Dendritic cell treated with granulocyte-macrophage colony-stimulating factor and Interleukin-4, amounts not matched to agents 40 ng/mL and 50 ng/mL, for 4 days (primary cell): ENCODE measurements at regions of chr4 and their contacts with region 1.

Region 1: DNA sequence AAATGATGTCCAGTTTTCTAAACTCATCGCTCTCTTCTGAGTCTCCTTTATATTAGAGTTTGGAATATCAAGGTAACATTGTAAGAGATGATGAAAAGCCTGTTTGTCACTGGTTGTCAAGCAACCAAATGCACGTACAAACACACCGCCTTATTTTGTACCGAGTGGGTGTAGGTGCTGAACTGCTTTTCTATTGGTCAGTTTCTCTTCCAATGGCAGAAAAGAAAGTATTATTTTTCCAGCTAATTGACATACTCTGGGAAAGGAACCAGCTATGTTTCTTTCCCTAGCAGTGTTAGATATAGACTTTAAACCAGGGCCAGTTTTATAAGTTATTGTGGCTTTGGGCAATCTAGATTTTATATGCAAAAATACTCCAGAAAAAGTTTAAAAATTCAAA is 6.6 kb upstream of the PPM1K start:
- H3K4me3 Mint-ChIP-seq: no peak overlapping the region
- H3K27ac Mint-ChIP-seq: no peak overlapping the region
- H3K4me1 Mint-ChIP-seq: no peaks in the 10 kb centered on the region
- H3K27me3 Mint-ChIP-seq: no peaks in the 10 kb centered on the region

Region 2: GRCh38 chr4:88276952-88277710 is 13.9 kb before region 1 on chr4:
- intact Hi-C with region 1: loop called (anchors 2 kb)
- H3K4me3 Mint-ChIP-seq: no peak overlapping the region
- H3K27ac Mint-ChIP-seq: no peak overlapping the region
- H3K4me1 Mint-ChIP-seq: peaks cover 40% of the 10 kb centered on the region
- H3K27me3 Mint-ChIP-seq: peaks cover 1% of the 10 kb centered on the region